ENCODE measurements at regions of chr11 and their contacts with region 1.

Region 1: GRCh38 chr11:33942954-33943353 is 51.1 kb upstream of the LMO2 start:
- DNase-seq: peak in 4 of 5 donors; percentile 46 to 58 (median 56)
- ATAC-seq: peak; percentile 47 to 76 (median 68)
- H3K4me3 ChIP-seq: no peak overlapping the region
- H3K27ac ChIP-seq: peak overlapping the region in 3 of 12 donors; percentile 14 to 47 (median 23)
- H3K4me1 ChIP-seq: peaks cover 0 to 34% (median 21%) of the 10 kb centered on the region in 12 donors
- H3K27me3 ChIP-seq: no peaks in the 10 kb centered on the region
- CTCF ChIP-seq: no peak
- POLR2A ChIP-seq: no peak

Region 2: GRCh38 chr11:33825854-33826560 is 116.9 kb before region 1 on chr11:
- intact Hi-C with region 1: no loop called
- DNase-seq: no peak
- ATAC-seq: no peak
- H3K4me3 ChIP-seq: no peak overlapping the region
- H3K27ac ChIP-seq: no peak overlapping the region
- H3K4me1 ChIP-seq: peaks cover 3 to 10% (median 7%) of the 10 kb centered on the region in 12 donors
- H3K27me3 ChIP-seq: peaks cover 0 to 76% (median 11%) of the 10 kb centered on the region in 9 donors
- CTCF ChIP-seq: no peak
- POLR2A ChIP-seq: no peak

Region 3: GRCh38 chr11:33869481-33870422 is 73.2 kb before region 1 on chr11:
- intact Hi-C with region 1: loop called in 4 of 10 experiments (anchors 5 to 10 kb)
- DNase-seq: peak; percentile 47 to 76 (median 69)
- ATAC-seq: peak; percentile 73 to 91 (median 80)
- H3K4me3 ChIP-seq: peak overlapping the region; percentile 35 to 89 (median 69)
- H3K27ac ChIP-seq: peak overlapping the region; percentile 69 to 93 (median 84)
- H3K4me1 ChIP-seq: peaks cover 0 to 54% (median 17%) of the 10 kb centered on the region in 12 donors
- H3K27me3 ChIP-seq: peaks cover 0 to 17% (median 0%) of the 10 kb centered on the region in 9 donors
- CTCF ChIP-seq: no peak
- POLR2A ChIP-seq: peak in 1 of 2 donors; percentile 16